ENCODE measurements at regions of chr2 and their contacts with region 1.

Region 1: GRCh38 chr2:168194784-168195522 is 52.4 kb downstream of the STK39 start:
- DNase-seq: no peak
- H3K4me3 ChIP-seq: no peak overlapping the region
- H3K27ac ChIP-seq: no peak overlapping the region
- H3K4me1 ChIP-seq: peaks cover 16% of the 10 kb centered on the region
- H3K27me3 ChIP-seq: no peaks in the 10 kb centered on the region
- CTCF ChIP-seq: no peak

Region 2: DNA sequence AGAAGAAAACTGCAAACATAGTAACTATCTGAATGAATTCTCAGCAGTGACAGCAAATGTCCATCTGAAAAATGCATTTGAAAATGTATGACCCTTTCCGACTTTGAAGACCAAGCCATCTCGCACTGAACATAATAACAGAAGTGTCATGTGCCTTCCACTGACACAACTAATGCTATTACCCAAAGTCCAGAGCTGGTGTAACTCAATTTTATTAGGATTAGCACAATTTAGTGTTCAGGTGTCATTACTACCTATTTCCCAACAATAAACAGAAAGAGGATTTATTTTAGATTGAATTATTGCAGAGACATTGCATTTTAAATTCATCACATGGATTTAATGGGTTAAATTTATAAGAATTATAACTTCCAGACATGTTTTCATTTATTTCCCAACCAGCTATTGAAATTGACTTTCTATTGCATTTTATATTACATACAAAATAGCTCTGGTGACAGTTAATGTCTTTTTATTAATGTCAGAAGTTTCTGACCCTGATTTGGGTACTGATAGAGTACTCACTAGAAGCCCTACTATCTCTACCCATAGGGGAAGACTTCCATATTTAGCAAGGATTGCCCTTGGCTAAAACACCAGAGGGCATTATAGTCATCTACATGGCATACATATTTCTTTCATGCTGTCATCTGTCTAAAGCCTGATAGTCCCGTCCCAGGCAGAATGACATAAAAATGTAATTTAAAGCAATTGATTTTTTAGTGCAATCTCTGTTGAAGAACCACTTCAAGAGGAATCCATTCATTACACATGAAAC is 59.4 kb after region 1 on chr2:
- CTCF ChIA-PET with region 1: no interaction called
- POLR2A ChIA-PET with region 1: no interaction called
- intact Hi-C with region 1: no loop called
- DNase-seq: peak; percentile 37
- H3K4me3 ChIP-seq: no peak overlapping the region
- H3K27ac ChIP-seq: no peak overlapping the region
- H3K4me1 ChIP-seq: peaks cover 11% of the 10 kb centered on the region
- H3K27me3 ChIP-seq: no peaks in the 10 kb centered on the region
- CTCF ChIP-seq: no peak

Region 3: GRCh38 chr2:168300460-168300859 is 105.5 kb after region 1 on chr2:
- CTCF ChIA-PET with region 1: no interaction called
- POLR2A ChIA-PET with region 1: interaction called, 18 read pairs
- intact Hi-C with region 1: no loop called
- DNase-seq: peak; percentile 37
- H3K4me3 ChIP-seq: no peak overlapping the region
- H3K27ac ChIP-seq: no peak overlapping the region
- H3K4me1 ChIP-seq: no peaks in the 10 kb centered on the region
- H3K27me3 ChIP-seq: no peaks in the 10 kb centered on the region
- CTCF ChIP-seq: no peak

Measured in A673 (cell line).